Activated CD4-positive, alpha-beta T cell treated with anti-CD3 and anti-CD28 coated beads for 36 hours (primary cell): ENCODE measurements at regions of chr15 and their contacts with region 1.

Region 1: GRCh38 chr15:94230956-94231722 is at the start of gene MCTP2:
- DNase-seq: peak; percentile 91
- ATAC-seq: peak; percentile 82
- H3K4me3 Mint-ChIP-seq: peak within 1 kb of the TSS; percentile 80
- H3K27ac Mint-ChIP-seq: peak within 1 kb of the TSS; percentile 94
- H3K4me1 Mint-ChIP-seq: peaks cover 67% of the 10 kb centered on the region
- H3K27me3 Mint-ChIP-seq: peaks cover 11% of the 10 kb centered on the region
- total RNA-seq, gene MCTP2: 25.2 to 27.8 TPM

Region 2: DNA sequence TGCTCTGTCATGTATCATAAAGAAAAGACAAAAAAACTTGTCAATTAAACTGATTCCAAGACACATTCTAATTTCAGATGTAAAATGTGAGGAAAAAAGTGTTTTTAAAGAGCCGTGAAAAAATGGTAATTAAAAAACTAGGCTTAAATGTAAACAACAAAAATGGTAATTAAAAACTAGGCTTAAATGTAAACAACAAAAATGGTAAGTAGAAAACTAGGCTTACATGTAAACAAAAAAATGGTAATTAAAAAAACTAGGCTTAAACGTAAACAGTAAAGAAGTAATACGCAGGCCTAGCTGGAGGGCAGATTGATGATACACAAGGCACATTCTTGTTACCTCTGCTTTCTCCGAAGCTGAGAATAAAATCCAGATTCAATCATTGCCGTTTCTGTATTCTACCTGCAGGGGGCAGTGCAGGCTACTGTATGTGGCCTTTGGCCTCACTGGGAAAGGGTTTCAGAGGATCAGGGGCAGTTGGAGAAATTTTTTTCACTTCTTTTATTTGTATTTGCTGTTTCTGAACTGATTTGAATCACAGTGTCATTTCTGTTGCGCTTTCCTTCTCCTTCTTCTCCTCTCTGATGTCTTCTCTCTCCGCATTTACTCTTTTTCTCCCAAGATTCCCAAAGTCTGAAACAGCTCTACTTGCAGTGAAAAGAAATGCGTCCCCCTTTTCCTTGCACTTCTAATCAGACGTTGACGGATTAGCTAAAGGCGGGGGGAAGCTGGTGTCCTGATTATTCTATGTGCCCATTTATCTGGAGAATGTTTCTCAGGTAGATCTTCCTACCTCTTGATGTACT is 66.9 kb before region 1 on chr15:
- CTCF ChIA-PET with region 1: interaction called, 7 read pairs
- POLR2A ChIA-PET with region 1: no interaction called
- intact Hi-C with region 1: loop called in 1 of 2 experiments (anchors 2 kb)
- DNase-seq: peak; percentile 75
- ATAC-seq: peak; percentile 49
- H3K4me3 Mint-ChIP-seq: no peak overlapping the region
- H3K27ac Mint-ChIP-seq: no peak overlapping the region
- H3K4me1 Mint-ChIP-seq: no peaks in the 10 kb centered on the region
- H3K27me3 Mint-ChIP-seq: no peaks in the 10 kb centered on the region

Region 3: GRCh38 chr15:94174399-94174802 is 56.7 kb before region 1 on chr15:
- CTCF ChIA-PET with region 1: no interaction called
- POLR2A ChIA-PET with region 1: interaction called, 3 read pairs
- intact Hi-C with region 1: loop called (anchors 1 to 2 kb)
- DNase-seq: peak; percentile 16
- ATAC-seq: peak; percentile 95
- H3K4me3 Mint-ChIP-seq: no peak overlapping the region
- H3K27ac Mint-ChIP-seq: no peak overlapping the region
- H3K4me1 Mint-ChIP-seq: peaks cover 25% of the 10 kb centered on the region
- H3K27me3 Mint-ChIP-seq: peaks cover 7% of the 10 kb centered on the region

Region 4: DNA sequence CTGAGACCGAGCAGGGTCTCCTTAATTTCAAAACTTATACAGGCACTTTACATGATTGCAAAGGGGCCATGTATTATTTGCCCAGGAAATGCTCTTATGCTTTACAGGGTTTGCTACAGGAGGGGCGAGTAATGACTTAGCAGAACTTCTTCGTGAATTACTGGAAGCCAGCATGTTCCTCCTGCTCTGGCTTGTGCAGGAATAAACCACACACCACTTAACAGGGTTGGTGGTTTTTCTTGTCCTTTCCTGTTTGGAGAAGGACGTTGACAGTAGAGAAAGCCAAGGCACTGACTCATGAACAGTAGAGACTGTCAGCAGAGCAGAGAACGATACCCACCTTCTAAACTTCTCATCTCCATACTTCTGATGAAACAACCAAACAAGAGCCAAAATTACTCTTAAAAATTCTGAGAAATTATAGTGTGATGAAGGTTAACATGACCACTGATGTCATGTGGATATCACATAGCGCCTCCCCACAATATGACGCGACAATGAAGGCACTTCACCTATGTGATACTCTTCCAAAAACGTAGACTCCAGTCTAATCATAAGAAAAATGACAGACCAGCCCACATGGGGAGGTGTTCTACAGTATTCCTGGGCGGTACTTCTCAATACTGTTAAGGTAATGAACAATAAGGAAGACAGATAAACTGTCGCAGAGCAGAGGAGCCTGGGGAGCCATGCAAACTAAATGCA is 24.5 kb before region 1 on chr15:
- CTCF ChIA-PET with region 1: no interaction called
- POLR2A ChIA-PET with region 1: interaction called, 5 read pairs
- intact Hi-C with region 1: loop called (anchors 1 kb)
- DNase-seq: peak; percentile 69
- ATAC-seq: peak; percentile 95
- H3K4me3 Mint-ChIP-seq: peak overlapping the region; percentile 21
- H3K27ac Mint-ChIP-seq: peak overlapping the region; percentile 77
- H3K4me1 Mint-ChIP-seq: peaks cover 16% of the 10 kb centered on the region
- H3K27me3 Mint-ChIP-seq: peaks cover 25% of the 10 kb centered on the region

Region 5: DNA sequence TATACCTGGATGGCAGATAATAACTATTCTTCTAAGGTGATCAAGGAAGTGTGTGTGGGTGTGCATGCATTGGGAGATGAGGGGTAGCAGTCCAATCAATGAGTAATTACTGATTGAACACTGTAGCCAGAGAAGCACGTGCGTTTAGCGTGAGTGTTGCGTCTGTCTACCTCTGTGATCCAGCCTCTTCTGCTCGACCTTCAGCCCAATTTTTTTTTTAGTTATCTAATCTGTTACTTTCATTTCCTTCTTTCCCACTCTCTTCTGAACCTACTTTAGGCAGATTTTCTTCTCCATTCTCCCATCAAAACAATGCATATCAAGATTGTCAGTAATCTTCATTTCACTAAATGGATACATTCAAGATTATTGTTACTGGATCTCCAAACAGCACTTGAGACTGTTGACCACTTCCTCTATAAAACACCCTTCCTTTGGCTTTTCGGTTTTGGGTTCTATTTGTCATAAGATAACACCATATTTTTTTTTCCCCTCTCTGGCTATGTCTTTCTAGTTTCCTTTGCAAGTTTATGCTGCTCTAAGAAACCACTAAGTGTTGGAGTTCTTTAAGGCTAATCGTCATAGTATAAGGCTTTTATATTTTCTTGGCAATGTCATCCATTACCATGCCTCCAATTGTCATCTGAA is 41.2 kb after region 1 on chr15:
- CTCF ChIA-PET with region 1: no interaction called
- POLR2A ChIA-PET with region 1: no interaction called
- intact Hi-C with region 1: loop called (anchors 1 to 2 kb)
- DNase-seq: no peak
- ATAC-seq: peak; percentile 83
- H3K4me3 Mint-ChIP-seq: no peak overlapping the region
- H3K27ac Mint-ChIP-seq: no peak overlapping the region
- H3K4me1 Mint-ChIP-seq: peaks cover 9% of the 10 kb centered on the region
- H3K27me3 Mint-ChIP-seq: no peaks in the 10 kb centered on the region

Region 6: DNA sequence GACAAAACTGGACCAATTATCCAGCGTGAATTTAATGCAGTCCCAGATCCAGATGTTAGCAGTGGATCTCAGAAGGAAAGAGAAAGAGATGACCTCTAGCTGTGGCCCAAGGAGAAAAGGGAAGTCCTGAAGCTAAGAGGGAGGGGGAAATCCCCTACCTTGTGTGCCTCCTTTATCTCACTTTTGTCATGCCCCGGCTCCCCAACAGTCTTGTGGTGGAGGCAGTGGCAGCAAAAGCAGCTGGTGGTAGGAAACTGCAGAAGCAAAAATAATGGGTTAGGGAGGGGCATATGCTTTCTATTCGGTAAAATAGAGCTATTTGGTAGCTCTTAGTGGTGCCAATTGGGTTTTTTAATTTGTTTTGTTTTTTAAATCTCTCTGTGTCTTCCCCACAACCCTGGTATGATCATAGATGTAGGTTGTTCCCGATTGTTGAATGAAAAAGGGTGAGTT is 56.7 kb after region 1 on chr15:
- CTCF ChIA-PET with region 1: interaction called, 5 read pairs
- POLR2A ChIA-PET with region 1: no interaction called
- intact Hi-C with region 1: loop called in 1 of 2 experiments (anchors 5 kb)
- DNase-seq: peak; percentile 67
- ATAC-seq: peak; percentile 96
- H3K4me3 Mint-ChIP-seq: peak overlapping the region; percentile 42
- H3K27ac Mint-ChIP-seq: peak overlapping the region; percentile 49
- H3K4me1 Mint-ChIP-seq: peaks cover 37% of the 10 kb centered on the region
- H3K27me3 Mint-ChIP-seq: no peaks in the 10 kb centered on the region

Region 7: DNA sequence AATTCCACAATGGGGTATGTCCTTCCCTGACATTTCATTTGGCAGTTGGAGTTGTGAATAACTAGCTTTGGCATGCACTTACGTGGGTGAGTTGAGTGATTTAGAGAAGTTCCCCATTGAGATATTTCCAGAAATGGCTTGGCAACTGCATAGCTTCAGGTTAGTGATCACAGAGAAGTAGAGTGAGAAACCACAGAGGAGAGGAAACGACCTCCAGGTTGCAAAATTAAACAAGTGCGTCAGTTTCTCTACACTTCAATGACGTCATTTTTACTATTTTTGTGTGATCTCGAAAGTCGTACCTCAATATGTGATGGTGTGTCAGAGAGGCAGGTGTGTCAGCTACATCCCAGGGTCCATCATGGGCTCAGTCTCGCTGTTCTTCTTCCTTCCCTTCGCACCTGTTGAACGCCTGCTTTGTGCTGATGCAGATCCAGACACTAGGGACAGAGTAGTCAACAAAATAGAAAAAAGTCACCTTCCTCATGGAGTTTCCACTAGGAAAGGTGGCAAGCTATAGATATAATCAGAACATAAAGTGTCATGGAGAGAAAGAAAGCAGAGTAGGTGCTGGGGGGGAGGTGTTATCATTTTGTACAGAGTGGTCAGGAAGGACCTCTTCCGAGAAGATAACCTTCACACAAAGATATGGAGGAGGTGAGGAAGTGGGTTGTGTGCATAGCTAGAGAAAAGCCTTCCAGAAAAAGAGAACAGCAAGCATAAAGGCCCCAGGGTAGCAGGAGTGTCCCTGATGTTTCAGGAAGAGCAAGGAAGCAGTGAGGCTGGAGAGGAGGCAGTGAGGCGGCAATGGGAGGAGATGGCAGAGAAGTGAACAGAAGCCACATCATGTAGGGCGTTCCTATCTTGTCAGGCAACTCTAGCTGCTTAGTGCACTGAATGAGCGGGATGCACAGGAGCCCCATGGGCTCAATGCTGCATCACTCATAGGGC is 75.8 kb after region 1 on chr15:
- CTCF ChIA-PET with region 1: interaction called, 6 read pairs
- POLR2A ChIA-PET with region 1: interaction called, 20 read pairs
- intact Hi-C with region 1: loop called (anchors 1 kb)
- DNase-seq: peak; percentile 38
- ATAC-seq: peak; percentile 74
- H3K4me3 Mint-ChIP-seq: no peak overlapping the region
- H3K27ac Mint-ChIP-seq: peak overlapping the region; percentile 87
- H3K4me1 Mint-ChIP-seq: peaks cover 43% of the 10 kb centered on the region
- H3K27me3 Mint-ChIP-seq: no peaks in the 10 kb centered on the region